BJ (cell line): ENCODE measurements at regions of chr12 and their contacts with region 1.

Region 1: GRCh38 chr12:121230538-121230907 is 20.6 kb downstream of the P2RX4 start:
- DNase-seq: no peak
- H3K4me3 ChIP-seq: no peak overlapping the region
- H3K27me3 ChIP-seq: no peaks in the 10 kb centered on the region
- CTCF ChIP-seq: no peak

Region 2: GRCh38 chr12:121214855-121215745 is 15.4 kb before region 1 on chr12:
- CTCF ChIA-PET with region 1: interaction called, 21 read pairs
- POLR2A ChIA-PET with region 1: no interaction called
- DNase-seq: peak; percentile 85
- H3K4me3 ChIP-seq: no peak overlapping the region
- H3K27me3 ChIP-seq: no peaks in the 10 kb centered on the region
- CTCF ChIP-seq: no peak

Region 3: DNA sequence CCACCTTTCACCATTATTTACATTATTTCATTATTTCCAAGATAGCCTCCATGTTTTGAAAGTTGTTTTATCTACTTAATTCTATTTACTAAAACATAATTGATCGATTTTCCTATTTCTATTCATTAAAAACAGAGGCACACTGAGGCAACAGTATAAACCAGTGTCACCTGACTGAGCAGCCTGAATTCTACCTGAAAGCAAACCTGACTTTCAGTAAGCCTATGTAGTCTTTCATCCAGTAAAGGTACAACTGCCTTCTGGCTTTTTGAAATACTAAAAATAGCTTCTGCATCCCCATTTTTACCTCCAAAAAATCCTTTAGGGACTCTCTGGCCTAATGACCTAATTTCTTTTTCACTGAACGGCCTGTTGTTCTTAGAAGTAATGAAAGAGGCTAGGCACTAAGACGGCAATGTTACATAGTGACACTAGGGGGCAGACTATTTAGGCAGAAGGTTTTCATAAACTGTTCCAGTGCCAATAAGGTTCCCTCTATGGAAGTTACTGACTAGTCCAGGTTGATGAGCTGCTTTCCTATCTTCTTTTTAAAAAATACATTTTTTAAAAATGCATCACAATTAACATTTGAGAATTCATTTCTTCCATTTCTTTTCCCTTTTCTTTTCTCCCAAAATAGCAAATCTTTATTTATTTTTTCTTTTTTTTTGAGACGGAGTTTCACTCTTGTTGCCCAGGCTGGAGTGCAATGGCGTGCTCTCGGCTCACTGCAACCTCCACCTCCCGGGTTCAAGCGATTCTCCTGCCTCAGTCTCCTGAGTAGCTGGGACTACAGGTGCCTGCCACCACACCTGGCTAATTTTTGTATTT is 104.2 kb after region 1 on chr12:
- CTCF ChIA-PET with region 1: no interaction called
- POLR2A ChIA-PET with region 1: no interaction called
- DNase-seq: peak; percentile 11
- H3K4me3 ChIP-seq: no peak overlapping the region
- H3K27me3 ChIP-seq: no peaks in the 10 kb centered on the region
- CTCF ChIP-seq: peak; percentile 88